K562 (cell line): ENCODE measurements at regions of chr11 and their contacts with region 1.

Region 1: DNA sequence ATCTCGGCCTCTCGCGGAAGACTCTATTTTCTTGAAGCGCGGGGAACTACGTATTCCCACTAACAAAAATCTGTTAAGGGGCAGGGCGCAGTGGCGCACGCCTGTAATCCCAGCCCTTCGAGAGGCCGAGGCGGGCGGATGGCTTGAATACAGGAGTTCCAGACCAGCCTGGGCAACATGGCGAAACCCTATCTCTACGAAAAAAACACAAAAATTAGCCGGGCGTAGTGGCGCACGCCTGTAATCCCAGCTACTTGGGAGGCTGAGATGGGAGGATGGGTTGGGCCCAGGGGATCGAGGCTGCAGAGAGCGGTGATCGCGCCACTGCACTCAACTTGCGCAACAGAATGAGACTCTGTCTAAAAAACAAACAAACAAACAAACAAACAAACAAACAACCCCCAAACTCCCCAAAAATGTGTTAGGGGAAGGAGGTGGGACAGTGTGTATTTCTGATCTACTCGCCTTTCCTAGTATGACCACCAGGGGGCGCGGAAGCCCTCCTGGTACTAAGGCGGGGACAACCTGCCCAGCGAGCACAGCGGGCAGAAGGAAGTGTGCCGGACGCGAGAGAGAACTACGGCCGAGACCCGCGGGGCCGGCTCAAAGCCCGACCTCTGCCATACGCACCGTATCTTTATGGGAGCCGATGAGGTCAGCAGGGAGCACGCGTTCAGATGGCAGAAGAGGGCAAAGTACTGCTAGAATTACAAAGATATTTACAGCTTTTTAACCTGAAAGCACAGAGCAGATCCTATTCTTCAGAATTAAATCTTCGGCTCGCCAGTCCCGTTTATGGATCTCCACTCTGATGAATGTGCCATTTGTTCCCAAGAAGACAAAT is 1.3 kb upstream of the STX3 start:
- DNase-seq: peak; percentile 87 to 90 (median 88)
- ATAC-seq: peak; percentile 67
- H3K4me3 ChIP-seq: peak overlapping the region; percentile 94
- H3K27ac ChIP-seq: peak overlapping the region; percentile 88; the same call in 2 of the 3 replicates
- H3K4me1 ChIP-seq: peaks cover 19 to 33% of the 10 kb centered on the region in 2 experiments; a peak in 4 of 5 replicates
- H3K27me3 ChIP-seq: no peaks in the 10 kb centered on the region
- CTCF ChIP-seq: peak; percentile 86 to 93 (median 87)
- EP300 ChIP-seq: no peak
- POLR2A ChIP-seq: no peak
- RAD21 ChIP-seq: peak; percentile 88 to 91

Region 2: GRCh38 chr11:59076876-59077571 is 676.8 kb before region 1 on chr11:
- CTCF ChIA-PET with region 1: no interaction called
- POLR2A ChIA-PET with region 1: no interaction called
- in situ Hi-C with region 1: no loop called
- intact Hi-C with region 1: no loop called
- DNase-seq: no peak
- ATAC-seq: no peak
- H3K4me3 ChIP-seq: no peak overlapping the region
- H3K27ac ChIP-seq: no peak overlapping the region
- H3K4me1 ChIP-seq: no peaks in the 10 kb centered on the region
- H3K27me3 ChIP-seq: no peaks in the 10 kb centered on the region; a peak in 1 of 5 replicates
- CTCF ChIP-seq: no peak
- EP300 ChIP-seq: no peak
- POLR2A ChIP-seq: no peak
- RAD21 ChIP-seq: no peak

Region 3: GRCh38 chr11:59680287-59681154 is 73.4 kb before region 1 on chr11:
- CTCF ChIA-PET with region 1: no interaction called
- POLR2A ChIA-PET with region 1: no interaction called
- in situ Hi-C with region 1: no loop called
- intact Hi-C with region 1: loop called (anchors 2 kb)
- DNase-seq: peak; percentile 54 to 92 (median 70)
- ATAC-seq: peak; percentile 100
- H3K4me3 ChIP-seq: no peak overlapping the region
- H3K27ac ChIP-seq: peak overlapping the region; percentile 8; the same call in 1 of the 3 replicates
- H3K4me1 ChIP-seq: peaks cover 11 to 15% of the 10 kb centered on the region in 2 experiments; a peak in 4 of 5 replicates
- H3K27me3 ChIP-seq: no peaks in the 10 kb centered on the region
- CTCF ChIP-seq: peak; percentile 88 to 92 (median 88)
- EP300 ChIP-seq: no peak
- POLR2A ChIP-seq: no peak
- RAD21 ChIP-seq: peak; percentile 82 to 93

Region 4: GRCh38 chr11:59767225-59767611 is 13.3 kb after region 1 on chr11:
- CTCF ChIA-PET with region 1: no interaction called
- POLR2A ChIA-PET with region 1: interaction called, 32 read pairs
- in situ Hi-C with region 1: no loop called
- intact Hi-C with region 1: no loop called
- DNase-seq: peak in 2 of 4 experiments; percentile 27 to 56
- ATAC-seq: peak; percentile 43
- H3K4me3 ChIP-seq: no peak overlapping the region
- H3K27ac ChIP-seq: no peak overlapping the region; the same call in 2 of the 3 replicates
- H3K4me1 ChIP-seq: peaks cover 25 to 44% of the 10 kb centered on the region in 2 experiments
- H3K27me3 ChIP-seq: no peaks in the 10 kb centered on the region
- CTCF ChIP-seq: no peak
- EP300 ChIP-seq: no peak
- POLR2A ChIP-seq: no peak
- RAD21 ChIP-seq: no peak

Region 5: DNA sequence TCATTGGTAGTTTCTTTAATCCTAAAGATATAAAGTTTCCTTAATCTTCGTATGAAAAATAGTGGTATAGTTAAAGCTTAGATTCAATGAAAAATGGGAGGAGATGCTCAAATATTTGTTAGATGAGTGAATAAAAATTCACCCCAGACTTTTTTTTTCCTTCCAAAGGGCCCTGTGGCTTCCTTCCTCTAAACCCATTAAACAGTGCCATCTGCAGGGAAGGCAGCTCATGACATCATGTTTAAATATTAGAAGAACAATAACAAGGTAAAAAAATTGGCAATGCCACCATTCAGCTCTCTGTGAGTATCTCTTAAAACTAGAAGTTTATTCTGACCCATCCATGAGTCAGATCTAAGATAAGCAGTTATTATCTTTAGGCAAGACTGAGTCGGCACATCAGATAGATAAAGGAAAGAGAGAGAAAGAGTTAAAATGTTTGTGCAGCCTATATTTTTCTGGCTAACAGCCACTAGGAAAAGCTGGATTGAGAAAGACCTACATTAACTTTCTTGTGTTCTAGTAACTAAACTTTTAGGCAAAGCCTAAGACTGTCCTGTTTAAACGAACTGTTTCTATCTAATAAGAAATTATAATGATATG is 165.2 kb after region 1 on chr11:
- CTCF ChIA-PET with region 1: interaction called, 8 read pairs
- POLR2A ChIA-PET with region 1: no interaction called
- in situ Hi-C with region 1: no loop called
- intact Hi-C with region 1: loop called (anchors 2 kb)
- DNase-seq: peak; percentile 34 to 74 (median 42)
- ATAC-seq: peak; percentile 71
- H3K4me3 ChIP-seq: no peak overlapping the region
- H3K27ac ChIP-seq: no peak overlapping the region
- H3K4me1 ChIP-seq: no peaks in the 10 kb centered on the region
- H3K27me3 ChIP-seq: no peaks in the 10 kb centered on the region
- CTCF ChIP-seq: peak; percentile 59 to 62 (median 61)
- EP300 ChIP-seq: no peak
- POLR2A ChIP-seq: no peak
- RAD21 ChIP-seq: peak; percentile 59 to 89

Region 6: GRCh38 chr11:60130496-60130895 is 376.6 kb after region 1 on chr11:
- CTCF ChIA-PET with region 1: no interaction called
- POLR2A ChIA-PET with region 1: no interaction called
- in situ Hi-C with region 1: no loop called
- intact Hi-C with region 1: loop called (anchors 1 kb)
- DNase-seq: peak; percentile 34 to 84 (median 53)
- ATAC-seq: peak; percentile 98
- H3K4me3 ChIP-seq: no peak overlapping the region
- H3K27ac ChIP-seq: no peak overlapping the region
- H3K4me1 ChIP-seq: peaks cover 0 to 12% of the 10 kb centered on the region in 2 experiments; a peak in 2 of 5 replicates
- H3K27me3 ChIP-seq: no peaks in the 10 kb centered on the region
- CTCF ChIP-seq: peak; percentile 67 to 76 (median 69)
- EP300 ChIP-seq: no peak; the same call in 1 of the 2 replicates
- POLR2A ChIP-seq: no peak
- RAD21 ChIP-seq: peak; percentile 97 to 99

Region 7: DNA sequence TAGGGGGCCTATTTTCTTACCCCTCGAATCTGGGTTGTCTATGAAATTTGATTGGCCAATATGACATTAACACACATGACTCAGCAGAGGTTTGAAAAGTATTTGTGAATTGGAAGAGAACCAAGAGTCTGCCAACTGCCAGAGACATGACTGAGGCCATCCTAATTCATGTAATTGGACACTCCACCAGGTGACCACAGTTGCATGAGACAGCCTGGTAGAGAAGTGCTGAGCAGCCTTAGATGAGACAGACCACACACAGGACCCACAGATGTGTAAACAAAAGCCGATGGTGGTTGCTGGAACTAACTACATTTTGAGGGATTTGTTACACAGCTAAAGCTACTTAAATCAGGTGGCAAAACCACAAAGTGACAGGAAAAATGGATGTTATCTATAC is 674.6 kb after region 1 on chr11:
- CTCF ChIA-PET with region 1: no interaction called
- POLR2A ChIA-PET with region 1: no interaction called
- in situ Hi-C with region 1: no loop called
- intact Hi-C with region 1: no loop called
- DNase-seq: no peak
- ATAC-seq: no peak
- H3K4me3 ChIP-seq: no peak overlapping the region
- H3K27ac ChIP-seq: no peak overlapping the region
- H3K4me1 ChIP-seq: no peaks in the 10 kb centered on the region; a peak in 1 of 5 replicates
- H3K27me3 ChIP-seq: no peaks in the 10 kb centered on the region
- CTCF ChIP-seq: no peak
- EP300 ChIP-seq: no peak
- POLR2A ChIP-seq: no peak
- RAD21 ChIP-seq: no peak